Lower leg skin (tissue), 4 donors: ENCODE measurements at regions of chr16 and their contacts with region 1.

Region 1: DNA sequence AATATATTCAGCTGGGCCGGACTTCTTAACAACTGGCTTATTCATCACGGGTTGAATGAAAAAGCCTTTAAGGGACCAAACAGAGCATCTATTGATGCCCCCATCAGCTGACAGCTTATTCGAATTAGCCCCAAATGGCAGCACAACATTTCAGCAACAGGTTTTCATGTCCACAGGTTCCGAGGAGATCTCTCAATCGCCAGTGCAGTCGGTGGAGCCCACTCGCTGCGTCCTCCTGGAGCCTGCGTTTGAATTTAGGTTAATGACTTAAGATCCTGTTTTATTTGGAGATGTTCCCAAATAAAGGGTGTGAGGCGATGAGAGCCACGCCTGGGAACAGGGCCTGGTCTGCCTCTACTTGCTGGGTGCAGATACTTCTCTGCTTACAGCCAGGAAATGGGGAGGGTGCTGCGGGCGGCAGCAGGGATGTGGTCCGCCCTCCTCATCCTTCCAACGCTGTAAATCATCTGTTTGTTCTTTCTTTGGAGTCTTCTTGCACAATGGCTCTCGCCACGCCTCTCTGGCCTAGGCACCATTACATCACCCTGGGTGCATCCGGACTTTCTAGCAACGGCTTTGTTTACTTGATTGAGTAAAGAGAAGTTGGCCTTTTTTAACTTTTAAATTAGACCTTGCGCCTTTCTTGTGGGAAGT is 22.6 kb downstream of the NDE1 start:
- DNase-seq: peak; percentile 97 to 98
- H3K4me3 ChIP-seq: no peak overlapping the region
- CTCF ChIP-seq: no peak
- POLR2A ChIP-seq: no peak

Region 2: GRCh38 chr16:15572329-15573001 is 100.2 kb before region 1 on chr16:
- intact Hi-C with region 1: no loop called
- DNase-seq: no peak
- H3K4me3 ChIP-seq: no peak overlapping the region
- CTCF ChIP-seq: no peak
- POLR2A ChIP-seq: no peak

Region 3: GRCh38 chr16:15644267-15644961 is 28.2 kb before region 1 on chr16:
- intact Hi-C with region 1: loop called (anchors 1 kb)
- DNase-seq: peak in 1 of 2 donors; percentile 29
- H3K4me3 ChIP-seq: no peak overlapping the region
- CTCF ChIP-seq: no peak
- POLR2A ChIP-seq: no peak

Region 4: GRCh38 chr16:16183562-16183961 is 510.9 kb after region 1 on chr16:
- intact Hi-C with region 1: no loop called
- DNase-seq: no peak
- H3K4me3 ChIP-seq: no peak overlapping the region
- CTCF ChIP-seq: no peak
- POLR2A ChIP-seq: no peak